ENCODE measurements at regions of chr11 and their contacts with region 1.

Region 1: GRCh38 chr11:18698341-18699268 is at the start of gene TMEM86A:
- DNase-seq: peak; percentile 96 to 97
- ATAC-seq: peak; percentile 94
- H3K4me3 ChIP-seq: peak within 1 kb of the TSS; percentile 61 to 69
- H3K27ac ChIP-seq: no peak within 1 kb of the TSS
- H3K4me1 ChIP-seq: no peaks in the 10 kb centered on the region
- H3K27me3 ChIP-seq: no peaks in the 10 kb centered on the region
- total RNA-seq, gene TMEM86A: 4.4 to 8.4 TPM

Region 2: GRCh38 chr11:18588297-18589252 is 110.0 kb before region 1 on chr11 and contains the start of gene UEVLD:
- intact Hi-C with region 1: loop called in 1 of 2 experiments (anchors 5 kb)
- DNase-seq: peak; percentile 92 to 96
- ATAC-seq: peak; percentile 98
- H3K4me3 ChIP-seq: peak within 1 kb of the TSS; percentile 70 to 96
- H3K27ac ChIP-seq: peak within 1 kb of the TSS in 1 of 2 donors; percentile 72
- H3K4me1 ChIP-seq: peaks cover 6 to 11% of the 10 kb centered on the region in 2 donors
- H3K27me3 ChIP-seq: no peaks in the 10 kb centered on the region
- total RNA-seq, gene UEVLD: 22.4 to 25.2 TPM

Region 3: DNA sequence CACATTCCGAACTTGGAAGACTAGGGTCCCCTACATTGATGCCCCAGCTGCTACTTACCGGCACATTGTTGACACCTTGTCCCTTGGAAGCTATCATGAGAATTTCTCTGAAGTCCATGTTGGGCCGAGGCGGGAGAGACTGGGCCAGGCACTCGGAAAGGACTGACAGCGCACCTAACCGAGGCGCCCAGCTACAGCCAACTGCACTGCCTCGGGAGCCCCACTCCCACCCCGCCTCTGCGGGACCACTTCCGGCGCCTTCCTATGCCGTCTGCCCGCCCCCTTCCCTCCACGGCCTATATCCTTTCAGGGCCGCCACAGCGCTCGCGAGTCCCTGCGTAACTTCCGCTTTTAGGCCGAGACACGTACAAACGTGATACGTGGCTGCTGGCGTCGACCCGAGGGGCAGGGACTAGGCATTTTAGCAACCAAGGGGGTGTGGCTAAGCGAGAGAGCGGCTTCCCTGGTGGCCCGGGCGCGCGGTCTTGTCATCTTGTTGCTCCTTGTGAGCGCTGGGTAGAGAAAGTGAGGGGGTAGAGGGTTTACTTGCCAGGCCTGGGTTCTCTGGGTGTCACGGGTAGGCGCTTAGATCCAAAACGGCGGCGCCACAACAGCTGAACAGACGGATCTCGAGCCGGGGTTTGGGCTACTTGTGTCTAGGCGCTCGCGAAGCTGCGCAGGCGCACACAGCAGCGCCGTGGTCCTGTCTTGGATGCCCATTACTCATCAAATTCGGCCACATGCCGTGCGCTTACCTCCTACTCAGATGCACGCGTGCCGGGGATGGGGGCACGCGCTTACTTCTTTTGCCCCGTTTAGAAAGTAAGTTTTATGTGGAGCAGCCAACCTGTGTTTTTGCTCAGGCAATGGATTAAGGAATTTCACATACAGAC is 64.2 kb before region 1 on chr11 and contains the start of gene SPTY2D1:
- intact Hi-C with region 1: loop called in 1 of 2 experiments (anchors 5 kb)
- DNase-seq: peak; percentile 100
- ATAC-seq: peak; percentile 100
- H3K4me3 ChIP-seq: peak within 1 kb of the TSS; percentile 75 to 84
- H3K27ac ChIP-seq: peak within 1 kb of the TSS; percentile 3 to 72
- H3K4me1 ChIP-seq: peaks cover 0 to 3% of the 10 kb centered on the region in 2 donors
- H3K27me3 ChIP-seq: no peaks in the 10 kb centered on the region
- total RNA-seq, gene SPTY2D1: 16.9 to 19.9 TPM